ENCODE measurements at regions of chr2 and their contacts with region 1.

Region 1: DNA sequence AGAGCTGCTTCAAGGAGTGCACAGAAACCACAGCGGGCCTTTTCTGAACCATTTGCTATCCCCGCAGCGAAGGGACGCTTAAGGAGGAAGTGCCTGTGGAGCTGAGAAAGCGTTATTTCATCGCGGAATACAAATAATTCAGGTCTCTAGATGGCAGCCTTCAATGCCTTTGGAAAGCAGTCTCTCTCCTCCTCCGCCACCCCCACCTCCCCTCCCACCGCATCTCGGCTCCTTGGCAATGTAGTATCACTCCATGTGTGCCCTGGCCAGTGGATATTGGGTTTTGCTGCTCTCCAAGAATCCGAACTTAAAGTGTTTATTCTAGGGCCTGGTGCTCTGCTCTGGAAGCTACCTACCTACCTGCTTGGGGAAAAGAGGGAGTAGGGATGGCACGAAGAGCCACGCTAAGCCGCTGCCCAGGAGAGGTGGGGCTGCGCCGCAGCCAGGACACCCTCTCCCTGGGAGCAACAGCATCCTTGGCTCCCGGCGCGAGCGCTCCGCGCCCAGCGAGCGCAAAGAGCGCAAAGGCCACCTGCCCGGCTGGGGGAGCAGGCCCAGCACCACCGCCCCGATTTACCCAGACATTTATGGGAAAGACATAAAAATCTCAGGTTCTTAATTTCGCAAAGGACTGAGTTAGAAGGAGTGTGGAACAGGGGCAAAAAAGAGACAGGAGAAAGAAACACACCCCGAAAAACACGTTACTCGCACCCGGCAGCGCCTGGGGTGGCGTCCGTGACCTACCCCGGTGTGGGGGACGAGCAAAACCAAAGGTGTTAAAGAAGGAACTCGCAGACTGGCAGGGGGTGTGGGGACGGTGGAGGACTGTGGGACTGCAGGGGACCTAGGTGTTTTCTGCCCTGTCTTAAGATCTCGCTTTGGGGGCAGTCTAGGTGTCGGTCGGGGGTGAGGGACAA is 1.0 kb downstream of the SPHKAP start:
- DNase-seq: peak; percentile 47
- ATAC-seq: peak; percentile 72

Region 2: GRCh38 chr2:228056293-228057097 is 123.9 kb before region 1 on chr2:
- intact Hi-C with region 1: loop called (anchors 10 kb)
- DNase-seq: no peak
- ATAC-seq: no peak

Region 3: DNA sequence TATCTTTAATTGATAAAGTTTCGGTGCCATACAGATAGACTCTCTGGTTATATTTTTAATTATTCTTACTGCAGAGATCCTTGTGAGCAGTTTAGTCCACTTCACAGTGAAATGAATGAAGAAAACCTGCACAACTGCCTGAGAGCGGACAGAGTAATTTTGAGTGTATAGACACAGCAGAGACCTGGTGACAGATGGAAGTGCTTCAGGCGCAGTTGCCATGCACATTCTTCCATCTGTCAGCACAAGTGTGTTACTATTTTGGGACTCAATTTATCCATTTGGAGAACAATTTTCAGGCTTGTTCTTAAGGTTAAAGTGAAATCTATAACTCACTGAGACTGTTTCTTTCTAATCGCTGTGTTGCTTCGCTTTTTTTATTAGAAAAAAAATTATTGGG is 148.8 kb after region 1 on chr2:
- intact Hi-C with region 1: loop called (anchors 10 kb)
- DNase-seq: peak; percentile 48
- ATAC-seq: peak; percentile 96

Region 4: DNA sequence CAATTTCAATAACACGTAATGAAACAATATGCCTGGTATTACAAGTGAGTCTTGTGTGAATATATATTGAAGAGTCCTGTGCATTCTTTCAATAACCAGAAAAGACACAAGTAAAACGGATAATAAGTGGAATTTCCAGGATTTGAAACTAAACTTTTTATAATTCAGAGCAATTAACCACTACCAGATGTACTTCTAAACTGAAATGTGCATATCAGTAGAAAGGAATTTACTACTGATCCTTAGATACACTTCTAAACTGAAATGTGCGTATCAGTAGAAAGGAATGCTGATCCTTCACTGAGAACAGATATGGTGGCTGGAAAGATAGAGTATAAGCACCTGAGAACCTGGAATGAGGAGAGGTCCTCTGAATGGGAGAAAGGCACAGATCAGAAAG is 471.9 kb after region 1 on chr2:
- intact Hi-C with region 1: loop called (anchors 5 kb)
- DNase-seq: no peak
- ATAC-seq: no peak